Common myeloid progenitor, CD34-positive (primary cell): ENCODE measurements at regions of chr6 and their contacts with region 1.

Region 1: DNA sequence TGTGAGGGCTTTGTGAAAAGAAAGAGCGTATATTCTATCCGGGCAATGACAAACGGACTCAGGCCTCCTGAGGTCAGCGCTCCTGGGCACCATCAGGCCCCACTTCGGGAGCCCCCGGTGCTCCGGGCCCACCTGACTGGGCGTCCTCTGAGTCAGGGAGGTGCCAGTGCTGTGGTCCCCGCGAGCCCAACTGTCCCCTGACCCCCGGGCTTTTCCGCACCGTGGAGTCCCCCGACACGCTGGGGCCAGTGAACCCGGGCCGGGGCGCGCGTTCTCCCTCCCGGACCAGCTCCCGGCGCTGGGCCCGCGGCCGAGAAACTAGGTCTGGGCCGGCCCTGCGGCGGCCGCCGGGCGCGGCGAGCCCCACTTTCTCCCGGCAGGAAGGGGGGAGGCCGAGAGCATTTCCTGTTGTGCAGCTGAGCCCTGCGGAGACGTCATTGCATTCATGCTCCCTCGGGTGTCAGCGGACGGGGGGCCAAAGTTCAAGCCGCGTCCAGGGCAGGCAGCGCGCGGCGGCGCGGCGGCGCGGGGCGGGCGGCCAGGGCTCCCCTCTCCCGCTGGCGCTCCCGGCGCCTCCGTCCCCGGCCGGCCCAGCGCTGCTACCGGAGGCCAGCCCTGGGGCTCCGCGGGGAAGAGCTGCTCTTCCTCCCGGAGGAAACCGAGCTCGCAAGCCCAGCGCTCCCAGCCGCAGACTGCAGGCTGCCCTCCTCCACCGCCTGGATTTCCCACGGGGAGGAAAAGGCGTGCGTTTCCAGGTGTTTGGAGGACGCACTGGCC is 18.3 kb downstream of the HIVEP2 start:
- DNase-seq: peak; percentile 57 to 78 (median 71)
- H3K4me3 ChIP-seq: peak overlapping the region; percentile 53 to 92 (median 77)
- H3K27ac ChIP-seq: peak overlapping the region; percentile 53 to 79
- H3K4me1 ChIP-seq: peaks cover 0 to 21% (median 12%) of the 10 kb centered on the region in 4 experiments
- H3K27me3 ChIP-seq: no peaks in the 10 kb centered on the region

Region 2: DNA sequence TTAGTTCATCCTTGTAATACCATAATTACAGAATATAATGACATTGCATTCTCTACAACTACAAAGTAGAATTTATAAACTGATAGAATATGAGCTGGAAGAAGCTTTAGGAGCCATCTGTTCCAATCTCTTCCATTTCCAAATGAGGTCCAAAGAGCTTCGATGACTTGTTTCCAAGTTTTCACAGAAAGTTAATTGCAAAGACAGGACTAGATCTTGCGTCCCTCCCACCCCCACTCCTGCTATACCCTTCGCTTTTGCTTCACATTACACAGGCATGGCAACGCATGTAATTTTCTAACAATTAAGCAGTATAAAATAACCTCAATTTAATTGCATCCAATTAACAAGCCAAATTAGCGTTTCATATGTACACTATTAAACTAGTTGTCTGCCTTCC is 11.3 kb after region 1 on chr6:
- CTCF ChIA-PET with region 1: interaction called, 25 read pairs
- POLR2A ChIA-PET with region 1: interaction called, 19 read pairs
- DNase-seq: no peak
- H3K4me3 ChIP-seq: no peak overlapping the region
- H3K27ac ChIP-seq: no peak overlapping the region
- H3K4me1 ChIP-seq: peaks cover 2 to 18% (median 5%) of the 10 kb centered on the region in 4 experiments
- H3K27me3 ChIP-seq: no peaks in the 10 kb centered on the region

Region 3: DNA sequence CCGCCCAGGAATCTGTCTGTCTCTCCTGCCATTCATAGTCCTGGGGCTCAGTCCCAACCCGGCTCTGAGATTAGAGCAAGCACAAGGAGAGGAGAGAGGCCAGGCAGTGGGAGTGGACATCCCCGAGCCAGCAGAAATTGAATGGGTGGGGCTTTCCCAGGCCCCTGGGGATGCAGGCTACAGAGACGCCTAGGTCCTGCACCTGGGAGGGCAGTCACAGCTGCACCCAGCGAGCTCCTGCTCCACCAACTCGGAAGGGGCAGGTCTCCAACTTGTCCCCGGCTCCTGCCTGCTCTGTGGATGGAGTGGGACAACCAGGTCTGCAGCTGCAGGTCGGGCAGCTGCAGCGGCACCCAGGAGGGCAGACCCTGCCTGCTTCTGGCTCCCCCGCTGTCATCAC is 122.9 kb after region 1 on chr6:
- CTCF ChIA-PET with region 1: no interaction called
- POLR2A ChIA-PET with region 1: no interaction called
- DNase-seq: no peak
- H3K4me3 ChIP-seq: no peak overlapping the region
- H3K27ac ChIP-seq: no peak overlapping the region
- H3K4me1 ChIP-seq: peaks cover 0 to 7% (median 3%) of the 10 kb centered on the region in 4 experiments
- H3K27me3 ChIP-seq: no peaks in the 10 kb centered on the region